Endothelial cell of umbilical vein (primary cell): ENCODE measurements at regions of chr6 and their contacts with region 1.

Region 1: GRCh38 chr6:48087448-48087847 is 23.5 kb downstream of the PTCHD4 start:
- DNase-seq: peak; percentile 56
- H3K4me3 ChIP-seq: no peak overlapping the region
- H3K27ac ChIP-seq: no peak overlapping the region
- H3K4me1 ChIP-seq: no peaks in the 10 kb centered on the region
- H3K27me3 ChIP-seq: no peaks in the 10 kb centered on the region
- CTCF ChIP-seq: peak in 1 of 2 donors; percentile 29
- POLR2A ChIP-seq: no peak

Region 2: GRCh38 chr6:48036316-48036715 is 51.1 kb before region 1 on chr6:
- CTCF ChIA-PET with region 1: no interaction called
- POLR2A ChIA-PET with region 1: no interaction called
- dilution Hi-C with region 1: no loop called
- intact Hi-C with region 1: no loop called
- DNase-seq: no peak
- H3K4me3 ChIP-seq: no peak overlapping the region
- H3K27ac ChIP-seq: no peak overlapping the region
- H3K4me1 ChIP-seq: no peaks in the 10 kb centered on the region
- H3K27me3 ChIP-seq: no peaks in the 10 kb centered on the region
- CTCF ChIP-seq: no peak
- POLR2A ChIP-seq: no peak

Region 3: GRCh38 chr6:48098923-48099322 is 11.5 kb after region 1 on chr6:
- CTCF ChIA-PET with region 1: interaction called, 10 read pairs
- POLR2A ChIA-PET with region 1: no interaction called
- dilution Hi-C with region 1: no loop called
- intact Hi-C with region 1: no loop called
- DNase-seq: peak; percentile 70
- H3K4me3 ChIP-seq: no peak overlapping the region
- H3K27ac ChIP-seq: no peak overlapping the region
- H3K4me1 ChIP-seq: peaks cover 33% of the 10 kb centered on the region
- H3K27me3 ChIP-seq: no peaks in the 10 kb centered on the region
- CTCF ChIP-seq: no peak
- POLR2A ChIP-seq: no peak

Region 4: DNA sequence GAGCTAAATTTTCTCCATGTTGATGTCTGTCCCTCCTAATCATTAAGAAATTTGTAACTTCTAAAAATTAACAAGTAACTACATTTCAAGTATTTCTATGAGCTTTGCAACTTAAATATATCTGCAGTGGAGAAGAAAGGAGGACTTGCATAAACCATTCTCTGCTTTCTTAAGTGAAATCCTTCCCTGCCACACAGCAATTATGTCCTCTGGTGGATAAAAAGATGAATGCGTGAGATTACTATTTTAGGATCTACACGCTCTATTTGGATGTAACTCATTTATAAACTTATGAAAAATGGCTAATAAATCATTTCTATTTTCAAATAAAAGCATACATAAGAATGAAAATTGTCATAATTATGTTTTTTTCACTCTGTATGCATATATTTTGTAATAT is 361.6 kb after region 1 on chr6:
- CTCF ChIA-PET with region 1: interaction called, 5 read pairs
- POLR2A ChIA-PET with region 1: no interaction called
- dilution Hi-C with region 1: no loop called
- intact Hi-C with region 1: loop called (anchors 5 kb)
- DNase-seq: peak; percentile 22
- H3K4me3 ChIP-seq: no peak overlapping the region
- H3K27ac ChIP-seq: no peak overlapping the region
- H3K4me1 ChIP-seq: no peaks in the 10 kb centered on the region
- H3K27me3 ChIP-seq: no peaks in the 10 kb centered on the region
- CTCF ChIP-seq: peak in 1 of 2 donors; percentile 5
- POLR2A ChIP-seq: no peak

Region 5: DNA sequence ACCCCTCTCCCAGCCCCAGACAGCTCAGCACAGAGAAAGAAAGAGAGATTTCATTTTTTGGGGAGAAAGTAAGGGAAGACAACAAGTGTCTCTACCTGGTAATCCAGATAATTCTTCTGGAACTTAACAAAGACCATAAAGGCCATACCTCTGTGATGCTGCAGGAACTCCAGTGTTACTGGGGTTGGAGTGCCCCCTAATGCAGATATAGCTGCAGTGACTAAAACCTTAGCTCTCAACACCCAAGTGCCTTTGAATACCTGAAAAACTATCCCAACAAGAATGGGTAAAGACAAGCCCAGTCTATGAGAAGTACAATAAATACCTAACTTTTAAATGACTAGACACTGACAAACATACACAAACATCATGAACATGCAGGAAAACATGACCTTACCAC is 388.8 kb after region 1 on chr6:
- CTCF ChIA-PET with region 1: interaction called, 44 read pairs
- POLR2A ChIA-PET with region 1: interaction called, 4 read pairs
- dilution Hi-C with region 1: no loop called
- intact Hi-C with region 1: loop called (anchors 1 kb)
- DNase-seq: peak; percentile 45
- H3K4me3 ChIP-seq: no peak overlapping the region
- H3K27ac ChIP-seq: no peak overlapping the region
- H3K4me1 ChIP-seq: no peaks in the 10 kb centered on the region
- H3K27me3 ChIP-seq: no peaks in the 10 kb centered on the region
- CTCF ChIP-seq: peak; percentile 6 to 37
- POLR2A ChIP-seq: no peak

Region 6: DNA sequence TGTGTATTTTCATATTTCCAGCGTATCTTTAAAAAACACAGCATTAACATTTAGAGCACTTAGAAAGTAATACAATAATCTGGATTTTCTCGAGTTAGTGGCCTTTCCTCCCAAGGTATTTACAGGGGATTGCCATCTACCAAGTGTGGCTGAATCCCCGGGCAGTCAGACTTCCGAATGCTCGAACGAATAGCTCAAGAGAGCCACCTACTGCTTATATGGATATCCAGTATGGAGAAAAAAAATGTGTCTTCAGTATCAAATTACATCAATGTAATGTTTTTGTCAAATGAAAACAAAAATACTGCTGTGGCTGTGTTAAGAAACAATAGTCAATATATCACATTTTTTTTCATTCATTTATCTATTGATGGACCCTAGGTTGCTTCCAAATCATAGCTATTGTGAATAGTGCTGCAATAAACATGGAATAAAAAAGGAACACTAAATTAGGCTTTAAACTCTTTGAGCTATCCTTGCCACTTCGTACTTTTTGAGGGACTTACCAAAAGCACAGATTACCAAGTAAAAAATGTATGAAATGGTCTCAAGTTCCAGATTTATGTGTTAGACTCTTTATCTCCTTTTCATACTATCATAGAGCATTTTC is 678.0 kb after region 1 on chr6:
- CTCF ChIA-PET with region 1: interaction called, 62 read pairs
- POLR2A ChIA-PET with region 1: no interaction called
- dilution Hi-C with region 1: no loop called
- intact Hi-C with region 1: loop called (anchors 1 kb)
- DNase-seq: peak; percentile 74
- H3K4me3 ChIP-seq: no peak overlapping the region
- H3K27ac ChIP-seq: no peak overlapping the region
- H3K4me1 ChIP-seq: peaks cover 3% of the 10 kb centered on the region
- H3K27me3 ChIP-seq: no peaks in the 10 kb centered on the region
- CTCF ChIP-seq: peak; percentile 49 to 50
- POLR2A ChIP-seq: no peak

Region 7: DNA sequence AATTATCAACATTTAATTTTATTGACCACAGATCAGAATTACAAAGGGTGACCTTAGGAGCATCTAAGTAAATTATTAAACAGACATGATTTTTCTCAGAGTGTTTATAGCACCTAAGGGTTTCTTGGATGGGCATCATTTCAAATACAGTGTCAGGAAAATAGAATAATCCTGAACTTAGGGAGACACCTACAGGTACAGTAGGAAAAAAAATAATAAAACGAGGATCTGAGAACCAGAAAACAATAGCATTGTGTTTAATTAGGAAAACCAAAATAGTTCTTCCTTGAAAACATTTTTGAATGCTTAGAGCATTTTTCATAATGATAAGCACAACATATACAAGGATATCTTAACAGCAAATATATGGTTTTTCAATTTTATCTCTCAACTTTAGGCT is 1336.4 kb after region 1 on chr6:
- CTCF ChIA-PET with region 1: interaction called, 8 read pairs
- POLR2A ChIA-PET with region 1: no interaction called
- dilution Hi-C with region 1: no loop called
- intact Hi-C with region 1: loop called (anchors 5 kb)
- DNase-seq: peak; percentile 14
- H3K4me3 ChIP-seq: no peak overlapping the region
- H3K27ac ChIP-seq: no peak overlapping the region
- H3K4me1 ChIP-seq: no peaks in the 10 kb centered on the region
- H3K27me3 ChIP-seq: no peaks in the 10 kb centered on the region
- CTCF ChIP-seq: no peak
- POLR2A ChIP-seq: no peak